Left colon (tissue), 2 donors: ENCODE measurements at regions of chr9 and their contacts with region 1.

Region 1: GRCh38 chr9:281741-282645 is 67.3 kb downstream of the DOCK8 start:
- DNase-seq: no peak
- ATAC-seq: no peak

Region 2: DNA sequence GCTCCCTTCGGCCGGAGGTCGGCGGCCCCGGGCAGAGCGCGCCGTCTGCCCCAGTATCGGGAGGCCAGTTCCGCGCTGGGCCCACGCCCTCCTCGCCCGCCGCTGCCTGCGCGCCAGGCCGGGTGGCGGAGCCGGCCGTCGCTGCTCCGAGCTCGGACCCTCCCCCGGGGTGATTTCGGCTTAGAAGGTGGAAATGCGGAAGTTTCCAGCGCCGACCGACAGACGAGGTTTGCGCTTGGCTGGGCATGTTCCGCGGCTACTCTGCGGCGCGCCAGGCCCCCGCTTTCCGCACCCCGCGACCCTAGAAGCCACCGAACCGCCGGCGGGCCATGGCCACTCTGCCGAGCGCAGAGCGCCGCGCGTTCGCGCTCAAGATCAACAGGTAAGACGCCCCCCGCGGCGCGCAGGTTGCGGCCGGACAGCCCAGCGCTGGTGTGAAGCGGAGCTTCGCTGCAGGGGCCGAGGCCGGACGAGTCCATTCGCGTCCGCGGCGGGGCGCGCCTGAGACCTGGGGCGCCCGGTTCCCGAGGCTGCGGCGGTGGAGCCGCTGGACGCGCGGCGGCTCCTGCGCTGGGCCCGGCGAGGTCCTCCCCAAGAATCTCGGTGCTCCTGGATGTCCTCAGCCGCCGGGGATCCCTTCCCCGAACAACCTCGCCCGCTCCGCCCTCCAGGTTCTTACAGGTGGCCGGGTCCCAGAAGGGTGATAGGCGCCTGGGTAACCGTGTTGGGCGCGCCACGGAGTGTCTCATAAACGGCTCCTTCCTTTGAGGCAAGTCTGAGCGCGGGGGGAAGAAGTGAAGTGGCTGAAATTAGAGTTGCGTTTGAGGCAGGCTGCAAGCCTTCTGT is 67.1 kb before region 1 on chr9 and contains the start of gene DOCK8:
- intact Hi-C with region 1: loop called in 1 of 2 experiments (anchors 10 kb)
- DNase-seq: peak; percentile 62 to 83
- ATAC-seq: peak; percentile 95
- total RNA-seq, gene DOCK8: 10.3 to 18.8 TPM

Region 3: GRCh38 chr9:326667-327066 is 44.7 kb after region 1 on chr9:
- intact Hi-C with region 1: no loop called
- DNase-seq: no peak
- ATAC-seq: no peak

Region 4: GRCh38 chr9:347667-348292 is 65.8 kb after region 1 on chr9:
- intact Hi-C with region 1: no loop called
- DNase-seq: no peak
- ATAC-seq: peak; percentile 57